Activated CD8-positive, alpha-beta T cell treated with anti-CD3 and anti-CD28 coated beads for 36 hours (primary cell): ENCODE measurements at regions of chr16 and their contacts with region 1.

Region 1: DNA sequence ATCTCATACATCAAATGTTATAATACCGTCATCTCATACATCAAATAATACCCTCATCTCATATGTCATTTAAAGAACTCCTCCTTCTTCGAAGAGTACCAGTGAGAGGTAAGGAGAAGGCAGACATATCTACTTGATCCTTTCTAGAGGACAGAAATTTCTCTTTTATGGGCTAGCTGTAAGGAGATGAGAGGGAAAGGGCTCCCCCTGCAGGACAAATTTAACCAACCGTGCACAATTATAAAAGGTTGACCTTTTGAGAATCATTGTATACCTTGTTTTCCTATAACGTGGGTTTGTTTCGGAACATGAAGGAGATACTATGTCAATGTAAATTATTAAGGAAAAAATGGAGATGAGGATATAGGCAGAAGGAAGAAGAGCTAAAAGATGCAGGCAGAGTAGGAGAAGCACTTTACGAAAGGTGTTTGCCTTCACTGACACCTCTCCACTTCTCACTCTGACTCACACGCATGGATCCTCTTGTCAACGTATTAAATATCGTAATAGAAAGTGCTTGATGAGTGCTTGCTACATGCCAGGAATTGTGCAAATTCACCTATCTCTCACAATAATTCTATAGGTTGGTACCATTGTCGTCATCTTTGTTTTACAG is 465.9 kb upstream of the ERCC4 start:
- DNase-seq: peak; percentile 60
- ATAC-seq: no peak
- H3K4me3 Mint-ChIP-seq: no peak overlapping the region
- H3K27ac Mint-ChIP-seq: no peak overlapping the region
- H3K4me1 Mint-ChIP-seq: no peaks in the 10 kb centered on the region
- H3K27me3 Mint-ChIP-seq: peaks cover 3% of the 10 kb centered on the region
- CTCF ChIP-seq: peak; percentile 78

Region 2: DNA sequence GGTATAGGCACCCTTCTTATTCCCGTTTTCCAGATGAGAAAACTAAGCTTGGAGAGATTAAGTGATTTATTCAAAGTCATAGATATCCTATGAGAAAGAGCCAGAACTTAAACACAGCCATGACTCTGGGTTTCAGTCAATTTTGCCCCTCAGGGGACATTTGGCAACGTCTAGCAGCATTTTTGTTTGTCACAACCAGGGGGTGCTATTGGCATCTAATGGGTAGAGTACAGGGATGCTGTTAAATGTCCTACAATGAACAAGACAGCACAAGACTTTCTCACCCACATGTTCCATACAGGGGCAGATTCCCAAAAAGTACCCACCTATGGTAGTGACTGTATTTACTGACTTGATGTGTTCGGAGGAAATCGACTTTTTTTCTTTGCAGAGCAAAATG is 557.5 kb before region 1 on chr16:
- CTCF ChIA-PET with region 1: no interaction called
- POLR2A ChIA-PET with region 1: no interaction called
- intact Hi-C with region 1: loop called (anchors 10 kb)
- DNase-seq: no peak
- ATAC-seq: no peak
- H3K4me3 Mint-ChIP-seq: no peak overlapping the region
- H3K27ac Mint-ChIP-seq: no peak overlapping the region
- H3K4me1 Mint-ChIP-seq: no peaks in the 10 kb centered on the region
- H3K27me3 Mint-ChIP-seq: peaks cover 28% of the 10 kb centered on the region
- CTCF ChIP-seq: peak; percentile 55

Region 3: GRCh38 chr16:13083681-13084080 is 370.4 kb before region 1 on chr16:
- CTCF ChIA-PET with region 1: no interaction called
- POLR2A ChIA-PET with region 1: no interaction called
- intact Hi-C with region 1: no loop called
- DNase-seq: no peak
- ATAC-seq: no peak
- H3K4me3 Mint-ChIP-seq: no peak overlapping the region
- H3K27ac Mint-ChIP-seq: no peak overlapping the region
- H3K4me1 Mint-ChIP-seq: no peaks in the 10 kb centered on the region
- H3K27me3 Mint-ChIP-seq: no peaks in the 10 kb centered on the region
- CTCF ChIP-seq: no peak

Region 4: DNA sequence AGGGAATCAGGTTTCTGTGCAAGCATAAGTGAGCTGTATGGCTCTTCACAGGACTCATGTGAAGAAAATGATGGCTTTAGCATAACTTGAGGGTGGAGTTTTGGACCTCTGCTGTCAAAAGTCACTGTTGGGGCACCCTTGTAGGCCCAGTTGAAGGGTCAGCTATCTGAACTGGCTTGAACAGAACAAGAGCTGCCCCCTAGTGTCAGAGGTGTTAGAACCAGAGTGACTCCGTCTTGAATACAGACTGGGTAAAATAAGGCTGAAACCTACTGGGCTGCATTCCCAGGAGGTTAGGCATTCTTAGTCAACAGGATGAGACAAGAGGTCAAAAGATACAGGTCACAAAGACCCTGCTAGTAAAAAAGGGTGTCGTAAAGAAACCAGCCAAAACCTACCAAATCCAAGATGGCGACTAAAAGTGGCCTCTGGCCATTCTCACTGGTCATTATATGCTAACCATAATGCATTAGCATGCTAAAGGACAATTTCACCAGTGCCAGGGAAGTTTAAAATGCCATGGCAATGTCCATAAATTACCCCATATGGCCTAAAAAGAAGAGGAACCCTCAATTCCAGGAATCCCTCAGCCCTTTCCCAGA is 18.1 kb before region 1 on chr16:
- CTCF ChIA-PET with region 1: no interaction called
- POLR2A ChIA-PET with region 1: no interaction called
- intact Hi-C with region 1: no loop called
- DNase-seq: no peak
- ATAC-seq: no peak
- H3K4me3 Mint-ChIP-seq: no peak overlapping the region
- H3K27ac Mint-ChIP-seq: no peak overlapping the region
- H3K4me1 Mint-ChIP-seq: no peaks in the 10 kb centered on the region
- H3K27me3 Mint-ChIP-seq: no peaks in the 10 kb centered on the region
- CTCF ChIP-seq: no peak